ENCODE measurements at regions of chr2 and their contacts with region 1.

Region 1: GRCh38 chr2:120963997-120964705 is 228.5 kb downstream of the GLI2 start:
- DNase-seq: no peak
- ATAC-seq: no peak
- H3K4me3 ChIP-seq: no peak overlapping the region
- H3K27ac ChIP-seq: no peak overlapping the region
- H3K4me1 ChIP-seq: no peaks in the 10 kb centered on the region
- H3K27me3 ChIP-seq: no peaks in the 10 kb centered on the region

Region 2: GRCh38 chr2:121052521-121052920 is 88.4 kb after region 1 on chr2:
- intact Hi-C with region 1: loop called in 1 of 2 experiments (anchors 10 kb)
- DNase-seq: no peak
- ATAC-seq: peak; percentile 39
- H3K4me3 ChIP-seq: no peak overlapping the region
- H3K27ac ChIP-seq: no peak overlapping the region
- H3K4me1 ChIP-seq: no peaks in the 10 kb centered on the region
- H3K27me3 ChIP-seq: no peaks in the 10 kb centered on the region

Region 3: DNA sequence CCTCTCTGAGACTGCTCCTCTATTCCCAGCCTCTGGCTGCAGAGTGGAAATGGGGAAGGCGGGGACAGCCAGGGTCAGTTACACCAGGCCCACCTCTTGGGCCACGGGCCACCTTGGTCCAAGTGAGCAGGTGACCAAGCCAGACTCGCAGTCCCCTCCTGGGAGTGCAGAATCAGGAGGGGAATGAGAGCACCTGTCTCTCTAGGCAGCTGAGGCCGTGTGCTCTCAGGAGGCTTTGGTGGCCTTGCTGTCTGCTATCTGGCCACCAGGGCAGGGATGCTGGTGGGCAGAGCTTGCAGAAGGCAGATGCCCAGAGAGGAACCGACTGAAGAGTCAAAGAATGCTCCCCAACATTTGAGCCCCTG is 300.2 kb after region 1 on chr2:
- intact Hi-C with region 1: no loop called
- DNase-seq: peak in 1 of 2 donors; percentile 57
- ATAC-seq: peak; percentile 26
- H3K4me3 ChIP-seq: no peak overlapping the region
- H3K27ac ChIP-seq: no peak overlapping the region
- H3K4me1 ChIP-seq: no peaks in the 10 kb centered on the region
- H3K27me3 ChIP-seq: peaks cover 0 to 2% of the 10 kb centered on the region in 2 donors